ENCODE measurements at regions of chr19 and their contacts with region 1.

Region 1: DNA sequence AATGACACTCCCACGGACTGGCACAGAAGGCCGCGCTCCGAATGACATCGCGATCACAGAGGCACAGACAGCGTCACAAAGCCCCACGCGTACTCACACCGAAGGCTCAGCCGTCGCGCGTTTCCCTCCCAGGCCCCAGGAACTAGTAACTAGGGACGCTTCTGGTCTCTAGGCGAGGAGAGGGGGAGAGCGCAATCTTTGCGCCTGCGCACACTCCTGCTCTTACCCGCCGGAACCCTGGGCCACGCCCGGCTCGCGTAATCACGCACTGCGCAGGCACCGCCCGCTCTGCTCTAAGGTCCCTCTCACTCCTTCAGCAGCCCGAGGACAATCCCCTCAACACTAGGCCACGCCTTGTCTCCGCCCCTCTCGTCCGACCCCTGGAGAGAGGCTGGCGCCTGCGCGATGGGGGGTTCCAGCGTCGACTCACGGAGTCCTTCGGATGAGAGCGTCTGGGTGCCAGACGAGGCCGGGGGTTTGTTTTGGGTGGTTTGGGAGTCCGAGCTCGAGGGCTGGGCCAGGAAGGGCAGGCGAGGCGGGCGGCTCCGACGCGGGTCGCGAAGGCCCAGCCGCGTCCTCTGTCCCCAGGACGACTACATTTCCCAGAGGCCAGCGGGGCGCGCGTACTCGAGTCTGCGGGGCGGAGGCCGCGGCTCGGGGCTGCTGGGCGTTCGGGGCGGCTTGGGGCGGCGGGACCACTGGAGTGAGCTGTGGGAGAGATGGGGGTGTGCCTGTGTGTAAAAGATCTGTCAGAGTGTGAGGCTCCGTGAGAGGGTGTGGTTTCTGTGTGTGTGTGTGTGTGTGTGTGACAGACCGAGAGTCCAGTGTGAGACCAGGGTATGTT is at the start of gene ZNF471:
- DNase-seq: peak; percentile 98 to 100 (median 99)

Region 2: DNA sequence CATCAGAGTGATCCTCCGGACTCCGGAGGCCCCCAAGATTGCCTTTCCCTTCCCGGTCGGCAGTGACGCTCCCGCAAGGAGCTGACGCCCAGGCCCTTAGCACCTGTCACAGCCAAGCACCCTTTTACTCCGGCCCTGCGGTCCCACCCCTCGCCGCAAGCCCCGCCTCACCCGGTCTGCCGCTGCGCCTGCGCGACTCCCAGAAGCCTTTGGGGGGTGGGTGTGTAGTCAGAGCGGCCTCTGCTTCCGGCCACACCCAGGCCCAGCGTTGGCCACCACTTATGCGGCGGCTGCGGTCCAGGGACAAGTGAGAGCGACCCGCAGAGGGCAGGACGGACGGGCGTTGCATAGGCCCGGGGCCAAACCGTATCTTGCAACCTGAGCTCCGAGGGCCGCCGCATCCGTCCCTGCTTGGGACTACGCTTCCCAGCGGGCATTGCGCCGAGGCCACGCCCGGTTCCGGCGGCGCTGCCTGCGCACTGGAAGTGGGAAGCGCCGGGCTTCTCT is 30.6 kb after region 1 on chr19:
- intact Hi-C with region 1: loop called (anchors 2 kb)
- DNase-seq: peak; percentile 92 to 99 (median 96)

Region 3: GRCh38 chr19:56619121-56619520 is 111.5 kb after region 1 on chr19:
- intact Hi-C with region 1: no loop called
- DNase-seq: no peak